ENCODE measurements at regions of chr3 and their contacts with region 1.

Region 1: GRCh38 chr3:69791919-69792399 is 52.7 kb downstream of the MITF start:
- H3K4me3 Mint-ChIP-seq: no peak overlapping the region
- H3K27ac Mint-ChIP-seq: no peak overlapping the region
- H3K4me1 Mint-ChIP-seq: peaks cover 25% of the 10 kb centered on the region
- H3K27me3 Mint-ChIP-seq: no peaks in the 10 kb centered on the region

Region 2: GRCh38 chr3:69691860-69692259 is 100.1 kb before region 1 on chr3:
- intact Hi-C with region 1: loop called (anchors 1 kb)
- H3K4me3 Mint-ChIP-seq: no peak overlapping the region
- H3K27ac Mint-ChIP-seq: no peak overlapping the region
- H3K4me1 Mint-ChIP-seq: peaks cover 25% of the 10 kb centered on the region
- H3K27me3 Mint-ChIP-seq: peaks cover 2% of the 10 kb centered on the region

Region 3: GRCh38 chr3:69739204-69740102 is 52.5 kb before region 1 on chr3 and contains the start of gene MITF:
- intact Hi-C with region 1: loop called (anchors 5 kb)
- H3K4me3 Mint-ChIP-seq: peak within 1 kb of the TSS; percentile 90
- H3K27ac Mint-ChIP-seq: peak within 1 kb of the TSS; percentile 90
- H3K4me1 Mint-ChIP-seq: peaks cover 46% of the 10 kb centered on the region
- H3K27me3 Mint-ChIP-seq: no peaks in the 10 kb centered on the region

Region 4: GRCh38 chr3:69948246-69948862 is 156.4 kb after region 1 on chr3:
- intact Hi-C with region 1: loop called (anchors 2 kb)
- H3K4me3 Mint-ChIP-seq: no peak overlapping the region
- H3K27ac Mint-ChIP-seq: no peak overlapping the region
- H3K4me1 Mint-ChIP-seq: no peaks in the 10 kb centered on the region
- H3K27me3 Mint-ChIP-seq: no peaks in the 10 kb centered on the region

Measured in dendritic cell treated with granulocyte-macrophage colony-stimulating factor and Interleukin-4, amounts not matched to agents 40 ng/mL and 50 ng/mL, for 4 days (primary cell).